ENCODE measurements at regions of chr7 and their contacts with region 1.

Region 1: GRCh38 chr7:152025077-152025936 is at the start of gene GALNT11:
- DNase-seq: peak; percentile 63 to 81
- ATAC-seq: peak; percentile 96 to 97
- H3K4me3 ChIP-seq: peak within 1 kb of the TSS; percentile 65 to 80 (median 74)
- H3K27ac ChIP-seq: peak within 1 kb of the TSS; percentile 69 to 92 (median 83)
- H3K4me1 ChIP-seq: peaks cover 11 to 12% of the 10 kb centered on the region in 2 donors
- H3K27me3 ChIP-seq: no peaks in the 10 kb centered on the region
- CTCF ChIP-seq: peak; percentile 19 to 56 (median 49)
- POLR2A ChIP-seq: peak; percentile 88 to 89
- total RNA-seq, gene GALNT11: 16.3 to 49.1 (median 20.1) TPM

Region 2: GRCh38 chr7:151876899-151877777 is 148.2 kb before region 1 on chr7 and contains the start of gene PRKAG2:
- in situ Hi-C with region 1: no loop called
- intact Hi-C with region 1: loop called (anchors 10 kb)
- DNase-seq: peak; percentile 46 to 55
- ATAC-seq: peak; percentile 49 to 51
- H3K4me3 ChIP-seq: peak within 1 kb of the TSS; percentile 76 to 97 (median 86)
- H3K27ac ChIP-seq: peak within 1 kb of the TSS; percentile 87 to 93 (median 90)
- H3K4me1 ChIP-seq: peaks cover 8 to 18% of the 10 kb centered on the region in 2 donors
- H3K27me3 ChIP-seq: no peaks in the 10 kb centered on the region
- CTCF ChIP-seq: peak in 2 of 5 experiments; percentile 20 to 21
- POLR2A ChIP-seq: peak; percentile 49 to 59
- total RNA-seq, gene PRKAG2: 5.3 to 32.6 (median 13.9) TPM

Region 3: DNA sequence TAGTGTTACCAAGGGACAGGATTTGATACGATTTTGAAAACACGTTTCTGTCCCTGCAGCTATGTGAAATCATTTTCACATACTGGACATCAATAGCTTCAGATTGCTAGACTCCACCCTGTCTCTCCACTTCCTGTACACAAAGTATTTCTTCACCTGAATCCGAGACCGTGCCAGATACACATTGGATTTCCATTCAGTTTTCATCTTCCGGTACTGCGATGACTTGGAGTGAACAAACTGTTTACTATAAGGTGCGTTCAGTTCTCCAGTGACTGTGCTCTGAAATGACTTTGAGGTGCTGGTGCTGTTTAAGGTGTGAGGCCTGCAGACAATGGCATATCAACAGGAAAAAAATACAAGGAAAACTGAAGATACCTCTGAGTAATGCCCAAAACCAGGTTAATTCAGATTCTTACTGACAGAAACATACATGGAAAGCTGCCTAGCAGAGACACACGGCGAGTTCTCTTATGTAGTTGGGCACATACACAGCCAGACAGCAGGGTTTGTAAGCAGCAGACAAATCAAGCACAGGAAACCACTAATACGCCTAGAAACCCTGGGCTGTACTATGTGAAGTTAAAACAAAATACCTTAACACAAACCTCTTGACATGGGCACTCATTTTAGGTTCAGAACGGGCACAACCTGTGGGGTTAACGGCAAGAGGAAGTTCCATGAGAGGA is 119.4 kb after region 1 on chr7:
- in situ Hi-C with region 1: no loop called
- intact Hi-C with region 1: loop called (anchors 5 kb)
- DNase-seq: no peak
- ATAC-seq: no peak
- H3K4me3 ChIP-seq: no peak overlapping the region
- H3K27ac ChIP-seq: peak overlapping the region in 1 of 4 donors; percentile 1
- H3K4me1 ChIP-seq: no peaks in the 10 kb centered on the region
- H3K27me3 ChIP-seq: no peaks in the 10 kb centered on the region
- CTCF ChIP-seq: no peak
- POLR2A ChIP-seq: no peak

Measured in gastrocnemius medialis (tissue), 4 donors.